ENCODE measurements at regions of chr1 and their contacts with region 1.

Region 1: GRCh38 chr1:210233216-210234020 is 822 bp downstream of the SERTAD4 start:
- DNase-seq: peak; percentile 78
- H3K4me3 ChIP-seq: peak overlapping the region; percentile 78 to 84
- H3K27ac ChIP-seq: peak overlapping the region; percentile 35 to 97
- H3K4me1 ChIP-seq: peaks cover 25 to 36% of the 10 kb centered on the region in 2 experiments
- H3K27me3 ChIP-seq: no peaks in the 10 kb centered on the region
- CTCF ChIP-seq: no peak
- EP300 ChIP-seq: peak in 1 of 2 experiments; percentile 75; a peak in 2 of 4 replicates
- RAD21 ChIP-seq: no peak

Region 2: GRCh38 chr1:210214573-210215409 is 18.6 kb before region 1 on chr1:
- CTCF ChIA-PET with region 1: no interaction called
- POLR2A ChIA-PET with region 1: no interaction called
- DNase-seq: no peak
- H3K4me3 ChIP-seq: no peak overlapping the region
- H3K27ac ChIP-seq: no peak overlapping the region
- H3K4me1 ChIP-seq: no peaks in the 10 kb centered on the region
- H3K27me3 ChIP-seq: no peaks in the 10 kb centered on the region
- CTCF ChIP-seq: no peak
- EP300 ChIP-seq: no peak
- RAD21 ChIP-seq: no peak

Region 3: GRCh38 chr1:210259561-210259960 is 26.1 kb after region 1 on chr1:
- CTCF ChIA-PET with region 1: no interaction called
- POLR2A ChIA-PET with region 1: no interaction called
- DNase-seq: no peak
- H3K4me3 ChIP-seq: no peak overlapping the region
- H3K27ac ChIP-seq: no peak overlapping the region
- H3K4me1 ChIP-seq: peaks cover 11 to 28% of the 10 kb centered on the region in 2 experiments; a peak in 3 of 4 replicates
- H3K27me3 ChIP-seq: no peaks in the 10 kb centered on the region
- CTCF ChIP-seq: no peak
- EP300 ChIP-seq: no peak
- RAD21 ChIP-seq: no peak

Region 4: GRCh38 chr1:210292231-210292871 is 58.9 kb after region 1 on chr1:
- CTCF ChIA-PET with region 1: interaction called, 13 read pairs
- POLR2A ChIA-PET with region 1: interaction called, 29 read pairs
- DNase-seq: peak; percentile 80
- H3K4me3 ChIP-seq: peak overlapping the region; percentile 45 to 55
- H3K27ac ChIP-seq: peak overlapping the region; percentile 55 to 98; a peak in 3 of 4 replicates
- H3K4me1 ChIP-seq: peaks cover 23 to 43% of the 10 kb centered on the region in 2 experiments
- H3K27me3 ChIP-seq: no peaks in the 10 kb centered on the region
- CTCF ChIP-seq: peak; percentile 48
- EP300 ChIP-seq: no peak
- RAD21 ChIP-seq: no peak

Measured in SK-N-SH (cell line).